ENCODE measurements at regions of chr9 and their contacts with region 1.

Region 1: DNA sequence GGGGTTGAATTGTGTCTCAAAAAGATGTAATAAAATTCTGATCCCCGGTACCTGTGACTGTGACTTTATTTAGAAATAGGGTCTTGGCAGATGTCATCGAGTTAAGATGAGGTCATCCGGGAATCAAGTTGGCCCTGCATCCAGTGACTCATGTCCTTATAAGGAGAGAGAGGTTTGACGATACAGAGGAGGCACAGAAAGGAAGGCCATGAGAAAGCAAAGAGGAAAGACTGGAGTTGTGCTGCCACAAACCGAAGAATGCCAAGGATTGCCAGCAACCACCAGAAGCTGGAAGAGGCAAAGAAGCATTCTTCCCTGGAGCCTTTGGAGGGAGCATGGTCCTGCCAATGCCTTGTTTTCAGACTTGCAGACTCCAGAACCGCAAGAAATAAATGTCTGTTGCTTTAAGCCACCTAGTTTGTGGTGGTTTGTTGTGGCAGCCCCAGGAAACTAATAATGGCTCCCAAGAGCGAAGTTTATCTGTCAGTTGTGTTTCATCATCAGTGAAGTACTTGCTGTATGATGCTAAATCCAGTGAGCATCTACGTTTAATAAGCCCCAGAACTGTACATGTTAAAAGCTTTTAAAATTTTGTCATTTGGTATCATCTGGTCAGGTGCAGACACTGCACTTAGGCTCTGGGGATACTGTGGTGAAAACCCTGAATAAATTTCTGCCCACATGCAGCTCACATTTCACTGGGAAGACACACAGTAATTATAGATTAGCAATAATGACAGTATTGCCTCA is 114.8 kb downstream of the TLE4 start:
- DNase-seq: peak; percentile 20 to 39
- ATAC-seq: peak; percentile 79 to 89
- H3K4me3 ChIP-seq: peak overlapping the region in 1 of 4 donors; percentile 8
- H3K27ac ChIP-seq: peak overlapping the region; percentile 3 to 52 (median 21)
- H3K4me1 ChIP-seq: peaks cover 43 to 63% of the 10 kb centered on the region in 2 donors
- H3K27me3 ChIP-seq: no peaks in the 10 kb centered on the region
- CTCF ChIP-seq: no peak
- POLR2A ChIP-seq: no peak

Region 2: DNA sequence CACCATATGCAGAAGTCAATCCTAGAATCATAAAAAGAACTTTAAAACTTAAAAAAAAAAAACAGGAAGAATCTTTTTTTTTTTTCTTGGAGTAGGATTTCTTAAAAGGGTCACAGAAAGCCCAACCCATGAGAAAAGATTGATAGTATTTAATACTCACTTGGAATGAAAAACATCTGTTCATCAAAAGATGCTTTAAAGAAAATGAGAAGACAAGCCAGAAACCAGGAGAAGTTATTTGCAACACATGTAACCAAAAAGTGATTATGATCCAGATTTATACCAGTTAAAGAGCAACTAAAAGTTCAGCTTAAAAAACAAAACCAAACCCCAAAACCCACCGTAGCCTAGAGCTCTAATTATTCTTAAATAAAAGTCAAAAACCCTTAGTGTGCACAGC is 45.5 kb before region 1 on chr9:
- in situ Hi-C with region 1: no loop called
- intact Hi-C with region 1: loop called (anchors 5 kb)
- DNase-seq: no peak
- ATAC-seq: no peak
- H3K4me3 ChIP-seq: no peak overlapping the region
- H3K27ac ChIP-seq: no peak overlapping the region
- H3K4me1 ChIP-seq: peaks cover 9 to 14% of the 10 kb centered on the region in 2 donors
- H3K27me3 ChIP-seq: no peaks in the 10 kb centered on the region
- CTCF ChIP-seq: no peak
- POLR2A ChIP-seq: no peak

Measured in gastrocnemius medialis (tissue), 4 donors.